HEK293T (cell line): ENCODE measurements at regions of chr14 and their contacts with region 1.

Region 1: GRCh38 chr14:67285876-67286452 is 44.7 kb downstream of the PALS1 start:
- DNase-seq: peak; percentile 9

Region 2: DNA sequence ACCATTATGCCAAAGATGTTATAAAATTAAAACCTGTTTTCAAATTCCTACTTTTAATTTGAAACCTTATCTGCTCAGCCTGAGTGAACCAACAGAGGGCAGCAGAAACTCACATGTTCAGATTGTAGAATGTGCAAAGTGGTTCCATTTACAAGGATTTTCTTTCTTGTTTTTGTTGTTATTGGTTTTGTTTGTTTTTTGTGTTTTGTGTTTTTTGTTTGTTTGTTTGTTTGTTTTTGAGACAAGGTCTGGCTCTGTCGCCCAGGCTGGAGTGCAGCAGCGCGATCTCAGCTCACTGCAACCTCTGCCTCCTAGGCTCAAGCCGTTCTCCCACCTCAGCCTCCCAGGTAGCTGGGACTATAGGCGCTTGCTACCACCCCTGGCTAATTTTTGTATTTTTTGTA is 119.5 kb before region 1 on chr14:
- CTCF ChIA-PET with region 1: interaction called, 26 read pairs
- POLR2A ChIA-PET with region 1: no interaction called
- DNase-seq: peak; percentile 27

Region 3: DNA sequence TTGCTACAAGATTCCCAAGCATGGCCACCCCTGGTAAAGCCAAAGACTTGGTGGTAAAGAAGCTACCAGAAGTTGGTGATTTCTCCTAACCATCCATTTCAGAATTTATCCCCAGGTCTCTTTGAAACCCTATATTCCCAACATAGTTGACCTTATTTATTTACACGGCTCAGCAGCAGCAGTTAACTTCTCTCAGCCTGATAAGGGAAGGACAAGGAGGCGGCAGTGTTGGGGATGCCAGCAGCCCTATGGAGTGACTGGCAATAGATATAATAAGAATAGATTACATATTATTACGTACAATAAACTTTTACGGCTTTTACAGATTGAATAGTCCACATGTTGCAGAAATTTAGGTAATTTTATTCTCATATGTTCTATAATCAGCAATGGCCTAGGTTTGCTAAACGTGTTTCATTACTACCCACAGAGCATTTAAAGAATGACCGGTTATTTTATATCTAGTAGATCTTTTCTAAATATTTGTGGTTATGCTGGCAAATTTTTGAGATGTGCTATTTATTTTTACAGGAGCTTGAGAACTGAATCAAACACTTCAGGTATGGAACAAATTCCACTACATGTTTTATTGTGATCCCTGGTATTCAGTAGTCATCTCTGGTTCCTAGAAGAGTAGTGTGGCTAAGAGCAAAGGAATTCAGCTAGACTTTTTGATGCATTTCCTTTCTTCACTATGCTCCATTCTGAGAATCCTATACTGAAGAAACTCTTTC is 64.5 kb before region 1 on chr14:
- CTCF ChIA-PET with region 1: no interaction called
- POLR2A ChIA-PET with region 1: no interaction called
- DNase-seq: peak; percentile 28

Region 4: GRCh38 chr14:67319142-67319541 is 33.2 kb after region 1 on chr14:
- CTCF ChIA-PET with region 1: interaction called, 10 read pairs
- POLR2A ChIA-PET with region 1: no interaction called
- DNase-seq: no peak

Region 5: DNA sequence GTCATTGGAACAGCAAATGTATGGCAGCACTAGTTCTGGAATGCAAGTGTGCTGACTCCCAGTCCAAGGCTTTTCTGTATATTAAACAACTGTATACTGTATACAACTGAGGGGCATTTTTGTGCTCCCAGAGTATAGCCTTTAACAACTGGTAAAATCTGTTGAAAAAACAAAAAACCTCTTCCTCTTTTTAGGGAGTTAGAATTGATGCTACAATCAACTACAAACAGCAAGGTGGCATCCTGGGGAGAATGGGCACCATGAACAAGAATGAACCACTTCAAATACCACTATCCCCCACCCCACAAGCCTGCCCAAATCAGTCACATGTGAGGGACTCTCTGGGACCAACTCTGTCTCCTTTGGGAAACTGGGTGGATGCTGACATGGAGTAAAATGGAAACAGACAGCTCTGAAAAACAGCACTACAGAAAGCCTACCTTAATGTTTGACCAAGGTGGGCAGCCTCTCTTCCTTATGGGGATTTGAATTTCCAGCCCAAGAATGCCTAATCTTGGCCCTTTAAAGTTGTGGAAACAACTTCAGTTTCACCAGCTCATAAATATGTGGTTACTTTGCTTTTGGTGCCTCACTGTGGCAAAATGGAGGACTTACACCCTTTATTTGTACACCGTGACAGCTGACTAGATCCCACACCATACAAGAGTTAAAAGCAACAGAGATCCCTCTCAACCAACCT is 380.9 kb after region 1 on chr14:
- CTCF ChIA-PET with region 1: no interaction called
- POLR2A ChIA-PET with region 1: no interaction called
- DNase-seq: peak; percentile 57